Heart right ventricle (tissue), 16 donors: ENCODE measurements at regions of chrX and their contacts with region 1.

Region 1: DNA sequence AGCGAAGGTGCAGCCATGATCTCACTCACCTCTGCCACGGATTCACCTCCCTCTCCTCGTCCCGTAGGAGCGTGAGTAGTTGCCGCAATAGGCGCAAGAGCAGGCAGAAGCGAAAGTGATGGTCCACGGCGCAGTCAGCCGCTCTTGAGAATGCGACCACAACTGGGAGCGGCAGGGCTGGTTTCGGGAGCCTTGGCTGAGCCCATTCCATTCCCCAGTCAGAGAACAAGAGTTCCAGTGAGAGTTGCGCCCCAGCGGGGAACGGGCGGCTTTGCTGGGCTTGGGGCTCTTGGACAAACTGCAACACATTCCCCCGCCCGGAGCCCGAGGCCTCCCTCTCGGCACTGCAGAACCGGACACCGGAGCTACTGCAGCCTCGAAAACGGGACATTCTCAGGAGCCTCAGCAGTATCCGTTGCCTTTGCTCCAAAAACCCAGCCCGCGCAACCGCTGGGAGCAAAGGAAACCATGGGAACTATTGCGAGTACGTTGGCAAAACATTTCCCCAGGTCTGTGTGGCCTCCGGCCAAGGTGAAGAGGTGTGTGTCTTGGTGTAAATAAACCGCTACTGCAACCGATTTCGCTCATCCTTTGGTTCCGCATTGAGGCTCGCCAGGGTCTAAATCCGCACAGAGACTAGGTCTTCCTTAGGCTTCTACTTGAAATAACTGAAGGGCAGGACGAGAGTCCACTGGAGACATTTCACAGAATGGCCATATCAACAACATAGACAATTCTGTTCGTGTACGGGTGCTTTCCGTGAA is 5.7 kb upstream of the ZBTB33 start:
- DNase-seq: peak; percentile 68 to 78
- ATAC-seq: peak; percentile 85 to 95 (median 91)
- H3K4me3 ChIP-seq: peak overlapping the region; percentile 46 to 87 (median 70)
- H3K27ac ChIP-seq: peak overlapping the region; percentile 21 to 87 (median 84)
- H3K4me1 ChIP-seq: peaks cover 0 to 14% (median 10%) of the 10 kb centered on the region in 9 donors
- H3K27me3 ChIP-seq: peaks cover 0 to 6% (median 0%) of the 10 kb centered on the region in 7 donors
- CTCF ChIP-seq: no peak

Region 2: DNA sequence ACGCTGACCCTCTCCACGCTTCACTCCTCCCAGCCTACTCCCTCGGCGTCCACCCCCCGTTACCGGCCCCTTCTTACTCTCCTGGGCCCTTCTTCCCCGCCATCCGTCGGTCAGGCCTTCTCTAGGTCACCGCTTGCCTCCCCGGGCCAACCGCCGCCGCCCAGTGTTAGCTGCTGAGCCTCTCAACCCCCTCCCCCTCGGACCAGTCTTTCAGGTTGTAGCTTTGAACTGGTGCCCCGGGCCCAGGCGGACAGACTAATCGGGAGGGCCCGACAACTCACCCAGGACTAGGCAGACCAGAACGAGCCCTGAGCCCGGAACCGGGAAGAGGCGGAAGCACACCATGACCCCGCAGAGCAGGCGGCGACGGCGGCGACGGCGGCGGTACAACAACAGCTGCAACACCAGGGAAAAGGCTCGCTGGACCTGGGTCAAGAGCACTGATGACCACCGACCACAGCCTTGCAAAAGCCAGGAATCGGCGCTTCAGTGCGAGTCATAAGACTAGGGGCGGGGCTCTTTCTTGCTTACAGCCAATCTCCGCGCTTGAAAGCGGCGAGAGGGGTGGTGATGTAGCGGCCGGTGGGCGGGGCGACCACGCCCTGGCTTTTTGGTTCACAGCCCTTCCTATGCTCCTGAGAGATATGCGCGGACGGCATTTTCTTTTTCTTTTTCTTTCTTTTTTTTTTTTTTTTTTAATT is 224.1 kb after region 1 on chrX and contains the start of gene LAMP2:
- intact Hi-C with region 1: loop called in 1 of 10 experiments (anchors 10 kb)
- DNase-seq: peak; percentile 83 to 89
- ATAC-seq: peak; percentile 96 to 99 (median 98)
- H3K4me3 ChIP-seq: peak within 1 kb of the TSS; percentile 59 to 78 (median 65)
- H3K27ac ChIP-seq: peak within 1 kb of the TSS; percentile 80 to 91 (median 90)
- H3K4me1 ChIP-seq: peaks cover 0 to 40% (median 22%) of the 10 kb centered on the region in 9 donors
- H3K27me3 ChIP-seq: no peaks in the 10 kb centered on the region
- CTCF ChIP-seq: no peak
- total RNA-seq, gene LAMP2: 55.2 to 88.7 (median 61.5) TPM

Region 3: DNA sequence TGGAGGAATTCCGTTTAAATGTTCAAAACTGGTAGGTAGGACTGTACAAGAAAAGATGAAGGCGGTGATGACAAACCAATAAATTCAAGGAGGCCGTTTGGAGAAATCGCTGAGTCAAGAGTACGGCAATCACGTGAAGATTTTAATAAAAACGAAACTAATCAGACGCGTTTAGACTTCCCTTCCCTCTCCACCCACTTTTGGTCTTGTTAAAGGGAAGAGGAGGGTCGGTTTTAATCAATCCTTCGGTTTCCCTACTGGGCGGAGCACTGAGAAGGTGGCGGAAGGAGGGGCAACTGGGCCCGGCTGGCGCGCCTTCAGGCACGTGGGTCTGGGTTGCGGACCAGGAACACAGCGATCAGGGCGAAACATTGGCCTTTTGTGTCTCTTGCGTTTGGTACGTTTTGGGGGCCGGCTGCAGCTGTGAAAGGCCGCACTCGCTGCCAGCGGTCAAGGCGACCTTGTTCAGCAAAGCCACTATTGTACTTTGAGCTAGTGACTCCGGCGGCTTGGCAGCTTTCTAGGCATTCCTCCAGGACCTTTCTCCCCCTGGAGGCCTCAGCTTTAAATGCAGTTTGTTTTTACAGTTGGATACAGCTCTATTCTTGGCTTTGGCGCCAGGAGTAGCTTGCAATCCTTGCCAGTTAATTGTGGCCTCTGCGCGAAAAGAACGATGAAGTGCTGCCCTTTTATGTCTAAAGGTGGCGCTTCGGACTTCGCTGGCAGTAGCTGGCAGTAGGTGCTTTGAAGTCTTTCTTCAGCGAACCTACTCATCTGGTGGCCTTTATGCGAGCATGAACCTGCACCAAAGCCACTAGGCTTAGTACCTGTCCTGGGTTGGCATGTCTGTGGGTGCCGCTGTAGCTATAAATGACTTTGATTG is 241.0 kb after region 1 on chrX:
- intact Hi-C with region 1: loop called in 1 of 10 experiments (anchors 10 kb)
- DNase-seq: peak; percentile 71 to 83
- ATAC-seq: peak; percentile 83 to 96 (median 94)
- H3K4me3 ChIP-seq: peak overlapping the region in 9 of 10 donors; percentile 27 to 62 (median 55)
- H3K27ac ChIP-seq: peak overlapping the region; percentile 57 to 92 (median 86)
- H3K4me1 ChIP-seq: peaks cover 0 to 10% (median 4%) of the 10 kb centered on the region in 9 donors
- H3K27me3 ChIP-seq: no peaks in the 10 kb centered on the region
- CTCF ChIP-seq: peak in 8 of 9 donors; percentile 41 to 67 (median 58)